PC-9 (cell line): ENCODE measurements at regions of chr5 and their contacts with region 1.

Region 1: GRCh38 chr5:137096147-137097103 is 402.7 kb downstream of the SPOCK1 start:
- DNase-seq: no peak
- H3K4me3 ChIP-seq: no peak overlapping the region
- H3K27ac ChIP-seq: no peak overlapping the region
- H3K4me1 ChIP-seq: no peaks in the 10 kb centered on the region
- H3K27me3 ChIP-seq: no peaks in the 10 kb centered on the region
- CTCF ChIP-seq: no peak

Region 2: DNA sequence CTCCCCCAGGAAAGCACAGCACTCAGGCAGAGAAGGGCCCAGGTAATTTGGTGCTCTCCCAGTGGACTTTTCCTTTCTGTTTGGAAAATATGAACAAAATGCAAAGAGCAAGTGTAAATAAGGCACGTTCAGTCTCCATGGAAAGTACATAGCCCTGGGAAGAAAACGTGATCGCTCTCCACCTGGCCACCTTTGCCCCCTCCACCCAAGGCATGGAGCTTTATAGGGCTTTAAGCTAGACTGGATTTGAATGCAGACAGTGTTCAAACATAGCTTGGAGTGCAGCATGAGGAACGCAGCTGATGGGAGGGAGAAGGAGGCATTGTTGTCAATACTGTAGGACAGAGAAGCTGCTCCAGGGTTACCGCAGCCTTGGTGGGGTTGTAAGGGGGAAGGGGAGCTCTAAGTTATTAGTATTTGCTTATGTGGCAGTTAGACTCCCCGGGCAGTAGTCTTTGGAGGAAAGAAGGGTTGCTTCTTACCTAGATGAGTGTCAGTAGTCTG is 97.5 kb before region 1 on chr5:
- CTCF ChIA-PET with region 1: no interaction called
- POLR2A ChIA-PET with region 1: no interaction called
- intact Hi-C with region 1: no loop called
- DNase-seq: no peak
- H3K4me3 ChIP-seq: no peak overlapping the region
- H3K27ac ChIP-seq: no peak overlapping the region
- H3K4me1 ChIP-seq: no peaks in the 10 kb centered on the region
- H3K27me3 ChIP-seq: no peaks in the 10 kb centered on the region
- CTCF ChIP-seq: no peak

Region 3: GRCh38 chr5:137192293-137192743 is 95.9 kb after region 1 on chr5:
- CTCF ChIA-PET with region 1: interaction called, 12 read pairs
- POLR2A ChIA-PET with region 1: no interaction called
- intact Hi-C with region 1: no loop called
- DNase-seq: no peak
- H3K4me3 ChIP-seq: no peak overlapping the region
- H3K27ac ChIP-seq: no peak overlapping the region
- H3K4me1 ChIP-seq: 0 out of 2 replicates have a peak, but pooled peaks cover 10% of the 10 kb centered on the region
- H3K27me3 ChIP-seq: no peaks in the 10 kb centered on the region
- CTCF ChIP-seq: no peak